ENCODE measurements at regions of chr1 and their contacts with region 1.

Region 1: DNA sequence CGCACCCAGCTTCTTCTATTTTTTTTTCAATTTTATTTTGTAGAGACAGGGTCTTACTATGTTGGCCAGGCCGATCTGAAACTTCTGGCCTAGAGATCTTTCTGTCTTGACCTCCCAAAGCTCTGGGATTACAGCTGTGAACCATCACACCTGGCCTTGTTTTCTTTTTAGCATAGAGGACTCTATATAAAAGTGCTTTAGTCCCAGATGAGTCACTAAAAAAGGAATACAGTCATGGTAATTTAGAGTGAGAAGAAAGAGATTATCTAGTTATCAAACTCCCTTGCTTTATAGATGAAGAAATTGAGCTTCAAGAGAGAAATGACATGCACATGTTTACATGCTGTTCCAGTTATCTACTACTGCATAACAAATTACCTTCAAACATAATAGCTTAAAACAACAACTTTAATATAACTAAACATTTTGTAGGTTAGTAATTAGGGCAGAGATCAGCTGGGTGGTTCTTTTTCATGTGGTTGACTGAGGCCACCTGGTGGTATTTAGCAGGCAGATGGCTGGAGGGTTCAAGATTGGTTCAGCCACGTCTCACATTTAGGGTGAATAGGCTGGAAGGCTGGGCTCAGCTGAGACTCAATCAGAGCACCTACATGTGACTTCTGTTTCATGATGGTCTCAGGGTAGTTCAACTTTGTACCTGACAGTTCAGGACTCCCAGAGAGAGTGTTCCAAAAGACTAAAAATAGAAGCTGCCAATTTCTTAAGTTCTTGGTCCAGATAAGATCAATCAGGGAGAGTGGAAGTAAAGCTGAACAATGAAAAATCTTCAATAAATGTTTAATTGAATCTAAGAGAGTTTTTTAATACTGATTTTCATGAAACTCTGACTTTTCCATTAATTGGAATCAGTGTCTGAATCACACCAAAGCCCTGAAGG is 16.9 kb upstream of the MTF2 start:
- DNase-seq: no peak
- ATAC-seq: peak; percentile 82
- H3K4me3 Mint-ChIP-seq: no peak overlapping the region
- H3K27ac Mint-ChIP-seq: no peak overlapping the region
- H3K4me1 Mint-ChIP-seq: no peaks in the 10 kb centered on the region
- H3K27me3 Mint-ChIP-seq: peaks cover 13% of the 10 kb centered on the region
- CTCF ChIP-seq: no peak

Region 2: GRCh38 chr1:92749024-92749634 is 313.0 kb before region 1 on chr1:
- CTCF ChIA-PET with region 1: interaction called, 6 read pairs
- POLR2A ChIA-PET with region 1: no interaction called
- intact Hi-C with region 1: loop called (anchors 1 kb)
- DNase-seq: no peak
- ATAC-seq: peak; percentile 79
- H3K4me3 Mint-ChIP-seq: no peak overlapping the region
- H3K27ac Mint-ChIP-seq: no peak overlapping the region
- H3K4me1 Mint-ChIP-seq: no peaks in the 10 kb centered on the region
- H3K27me3 Mint-ChIP-seq: no peaks in the 10 kb centered on the region
- CTCF ChIP-seq: peak; percentile 32

Region 3: GRCh38 chr1:93014168-93014567 is 48.0 kb before region 1 on chr1:
- CTCF ChIA-PET with region 1: interaction called, 97 read pairs
- POLR2A ChIA-PET with region 1: no interaction called
- intact Hi-C with region 1: no loop called
- DNase-seq: no peak
- ATAC-seq: no peak
- H3K4me3 Mint-ChIP-seq: no peak overlapping the region
- H3K27ac Mint-ChIP-seq: no peak overlapping the region
- H3K4me1 Mint-ChIP-seq: peaks cover 1% of the 10 kb centered on the region
- H3K27me3 Mint-ChIP-seq: no peaks in the 10 kb centered on the region
- CTCF ChIP-seq: no peak

Measured in activated B cell treated with CpG ODN at 0.5 μM for 24 hours (primary cell).